Gastrocnemius medialis (tissue), 4 donors: ENCODE measurements at regions of chr1 and their contacts with region 1.

Region 1: DNA sequence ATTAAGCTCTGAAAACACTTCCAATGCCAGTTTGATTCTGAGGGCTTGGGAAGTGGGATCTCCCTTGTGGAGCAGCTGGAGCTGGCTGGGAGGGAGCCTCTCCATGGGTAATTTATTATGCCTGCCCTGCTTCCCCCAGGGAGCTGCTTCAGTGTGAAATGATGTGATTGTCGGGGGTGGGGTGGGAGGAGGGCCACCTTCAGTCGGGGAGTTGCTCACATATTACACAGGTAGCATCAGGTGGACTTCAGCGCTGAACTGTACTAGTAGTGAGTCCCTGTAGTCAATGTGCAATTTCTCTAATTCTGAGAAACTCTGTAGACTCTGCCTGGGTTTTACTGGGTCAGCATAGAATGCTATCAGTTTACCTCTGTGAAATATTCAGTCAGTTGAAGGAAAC is 12.8 kb downstream of the PLA2G2E start:
- DNase-seq: no peak
- ATAC-seq: no peak
- H3K4me3 ChIP-seq: no peak overlapping the region
- H3K27ac ChIP-seq: no peak overlapping the region
- H3K4me1 ChIP-seq: no peaks in the 10 kb centered on the region
- H3K27me3 ChIP-seq: no peaks in the 10 kb centered on the region
- CTCF ChIP-seq: no peak
- POLR2A ChIP-seq: no peak

Region 2: DNA sequence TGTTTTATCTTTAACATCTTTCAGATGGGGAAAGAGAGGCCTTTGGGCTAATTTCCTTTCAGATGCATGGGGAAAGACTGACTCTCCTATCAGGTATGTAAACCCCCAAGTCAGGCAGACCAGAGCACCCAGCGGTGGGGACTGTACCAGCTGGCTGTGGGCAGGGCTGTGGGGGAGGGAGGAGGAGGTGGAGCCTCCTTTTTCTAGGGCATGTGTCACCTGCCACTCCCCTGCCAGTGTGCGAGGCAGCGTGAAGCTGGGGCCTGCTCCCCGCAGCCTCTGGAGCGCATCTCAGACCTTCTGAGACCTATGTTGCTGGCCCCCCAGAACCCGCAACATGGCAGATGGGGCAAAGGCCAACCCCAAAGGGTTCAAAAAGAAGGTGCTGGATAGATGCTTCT is 228.4 kb after region 1 on chr1 and contains the start of gene PLA2G2F:
- in situ Hi-C with region 1: no loop called
- intact Hi-C with region 1: no loop called
- DNase-seq: no peak
- ATAC-seq: no peak
- H3K4me3 ChIP-seq: no peak within 1 kb of the TSS
- H3K27ac ChIP-seq: no peak within 1 kb of the TSS
- H3K4me1 ChIP-seq: no peaks in the 10 kb centered on the region
- H3K27me3 ChIP-seq: no peaks in the 10 kb centered on the region
- CTCF ChIP-seq: no peak
- POLR2A ChIP-seq: no peak
- total RNA-seq, gene PLA2G2F: not detected

Region 3: GRCh38 chr1:20158358-20159067 is 247.9 kb after region 1 on chr1:
- in situ Hi-C with region 1: loop called in 3 of 4 experiments (anchors 5 to 10 kb)
- intact Hi-C with region 1: no loop called
- DNase-seq: no peak
- ATAC-seq: no peak
- H3K4me3 ChIP-seq: no peak overlapping the region
- H3K27ac ChIP-seq: no peak overlapping the region
- H3K4me1 ChIP-seq: peaks cover 0 to 3% of the 10 kb centered on the region in 2 donors
- H3K27me3 ChIP-seq: peaks cover 0 to 3% (median 0%) of the 10 kb centered on the region in 3 donors
- CTCF ChIP-seq: no peak
- POLR2A ChIP-seq: no peak